A549 (cell line): ENCODE measurements at regions of chr1 and their contacts with region 1.

Region 1: GRCh38 chr1:31705080-31705866 is 1.5 kb upstream of the COL16A1 start:
- DNase-seq: peak; percentile 19 to 41
- ATAC-seq: peak in 1 of 2 experiments; percentile 22; a peak in 3 of 6 replicates
- H3K4me3 ChIP-seq: no peak overlapping the region
- H3K27ac ChIP-seq: peak overlapping the region; percentile 56 to 95; a peak in 4 of 6 replicates
- H3K4me1 ChIP-seq: peaks cover 55% of the 10 kb centered on the region
- CTCF ChIP-seq: no peak; the same call in 2 of the 3 replicates
- EP300 ChIP-seq: no peak
- POLR2A ChIP-seq: no peak
- RAD21 ChIP-seq: peak; percentile 62 to 64

Region 2: GRCh38 chr1:31663622-31664452 is 41.4 kb before region 1 on chr1:
- CTCF ChIA-PET with region 1: interaction called, 183 read pairs
- POLR2A ChIA-PET with region 1: interaction called, 8 read pairs
- DNase-seq: peak; percentile 30 to 74
- ATAC-seq: peak; percentile 49 to 66; a peak in 5 of 6 replicates
- H3K4me3 ChIP-seq: no peak overlapping the region
- H3K27ac ChIP-seq: peak overlapping the region in 1 of 2 experiments; percentile 91; a peak in 3 of 6 replicates
- H3K4me1 ChIP-seq: peaks cover 33% of the 10 kb centered on the region
- CTCF ChIP-seq: peak; percentile 76
- EP300 ChIP-seq: no peak
- POLR2A ChIP-seq: no peak
- RAD21 ChIP-seq: peak; percentile 95 to 96

Region 3: DNA sequence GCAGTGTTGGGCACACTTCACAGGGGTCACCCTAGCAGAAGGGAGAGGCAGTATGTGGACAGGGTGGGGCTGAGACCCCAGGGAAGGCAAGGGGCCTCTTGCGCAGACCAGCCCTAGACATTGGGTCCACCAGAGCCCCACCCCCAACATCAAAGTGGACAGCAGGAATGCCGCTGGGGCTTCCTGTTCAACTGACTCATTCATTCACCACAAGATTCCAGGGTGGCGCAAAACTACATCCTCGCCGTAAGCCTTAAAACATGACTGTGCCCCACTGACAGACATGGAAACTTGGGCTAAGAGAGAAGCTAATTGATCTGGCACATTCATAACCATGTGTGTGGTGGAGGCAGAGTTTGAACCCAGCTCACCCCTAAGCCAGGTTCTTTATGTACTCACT is 15.5 kb before region 1 on chr1:
- CTCF ChIA-PET with region 1: interaction called, 6 read pairs
- POLR2A ChIA-PET with region 1: interaction called, 11 read pairs
- DNase-seq: peak; percentile 47 to 64
- ATAC-seq: peak; percentile 57 to 66; a peak in 4 of 6 replicates
- H3K4me3 ChIP-seq: no peak overlapping the region
- H3K27ac ChIP-seq: peak overlapping the region; percentile 68 to 95
- H3K4me1 ChIP-seq: peaks cover 61% of the 10 kb centered on the region
- CTCF ChIP-seq: no peak
- EP300 ChIP-seq: no peak
- POLR2A ChIP-seq: no peak
- RAD21 ChIP-seq: no peak

Region 4: GRCh38 chr1:31753707-31754349 is 48.6 kb after region 1 on chr1:
- CTCF ChIA-PET with region 1: no interaction called
- POLR2A ChIA-PET with region 1: no interaction called
- DNase-seq: no peak
- ATAC-seq: no peak
- H3K4me3 ChIP-seq: no peak overlapping the region
- H3K27ac ChIP-seq: peak overlapping the region in 1 of 2 experiments; percentile 28; a peak in 1 of 6 replicates
- H3K4me1 ChIP-seq: peaks cover 8% of the 10 kb centered on the region; the same call in 2 of the 3 replicates
- CTCF ChIP-seq: no peak
- EP300 ChIP-seq: no peak
- POLR2A ChIP-seq: no peak
- RAD21 ChIP-seq: no peak